Spleen (tissue), 13 donors: ENCODE measurements at regions of chr10 and their contacts with region 1.

Region 1: DNA sequence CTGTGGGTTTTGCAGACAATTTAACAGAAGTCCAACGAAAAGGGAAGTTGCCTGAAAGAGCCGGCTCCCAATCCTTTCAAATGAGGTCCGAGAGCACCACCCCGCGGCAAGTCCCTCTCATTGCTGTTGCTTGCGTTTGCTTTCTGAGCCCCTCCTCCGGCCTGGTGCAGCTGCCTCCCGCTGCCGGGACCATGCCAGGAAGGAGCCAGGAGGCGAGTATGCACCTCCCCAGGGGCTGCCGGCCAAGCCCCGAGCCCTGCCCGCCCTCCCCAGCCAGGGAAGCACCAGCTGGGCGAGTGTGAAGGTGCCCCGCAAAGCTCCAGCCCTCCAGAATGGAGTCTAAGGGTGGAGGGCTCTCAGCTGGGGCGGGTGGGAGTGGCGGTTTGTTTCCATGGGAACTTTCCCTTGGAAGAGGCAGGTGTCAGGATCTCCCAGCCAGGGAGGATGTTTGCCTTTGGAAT is 25.8 kb upstream of the PPP2R2D start:
- DNase-seq: peak; percentile 87
- H3K4me3 ChIP-seq: no peak overlapping the region
- H3K27ac ChIP-seq: no peak overlapping the region
- H3K4me1 ChIP-seq: peaks cover 0 to 9% (median 6%) of the 10 kb centered on the region in 6 donors
- H3K27me3 ChIP-seq: peaks cover 0 to 64% (median 12%) of the 10 kb centered on the region in 7 donors
- CTCF ChIP-seq: peak; percentile 35 to 81 (median 63)
- POLR2A ChIP-seq: no peak

Region 2: GRCh38 chr10:130190055-130190736 is 1684.8 kb before region 1 on chr10:
- intact Hi-C with region 1: loop called (anchors 10 kb)
- DNase-seq: peak; percentile 97
- H3K4me3 ChIP-seq: peak overlapping the region; percentile 48 to 81 (median 56)
- H3K27ac ChIP-seq: no peak overlapping the region
- H3K4me1 ChIP-seq: peaks cover 0 to 17% (median 14%) of the 10 kb centered on the region in 6 donors
- H3K27me3 ChIP-seq: peaks cover 0 to 16% (median 8%) of the 10 kb centered on the region in 7 donors
- CTCF ChIP-seq: peak; percentile 95 to 100 (median 100)
- POLR2A ChIP-seq: no peak